CD8-positive, alpha-beta T cell (primary cell): ENCODE measurements at regions of chr16 and their contacts with region 1.

Region 1: GRCh38 chr16:81444448-81445121 is at the start of gene CMIP:
- DNase-seq: peak; percentile 66 to 92 (median 80)
- ATAC-seq: peak; percentile 64
- H3K4me3 ChIP-seq: peak within 1 kb of the TSS; percentile 67 to 75
- H3K4me3 Mint-ChIP-seq: peak within 1 kb of the TSS; percentile 91
- H3K27ac ChIP-seq: peak within 1 kb of the TSS; percentile 37 to 78
- H3K27ac Mint-ChIP-seq: peak within 1 kb of the TSS; percentile 93
- H3K4me1 ChIP-seq: peaks cover 50% of the 10 kb centered on the region
- H3K4me1 Mint-ChIP-seq: peaks cover 50% of the 10 kb centered on the region
- H3K27me3 ChIP-seq: no peaks in the 10 kb centered on the region
- H3K27me3 Mint-ChIP-seq: no peaks in the 10 kb centered on the region
- CTCF ChIP-seq: no peak
- total RNA-seq, gene CMIP: 40.9 to 42.1 TPM

Region 2: GRCh38 chr16:81077076-81077940 is 367.3 kb before region 1 on chr16 and contains the start of gene C16orf46:
- CTCF ChIA-PET with region 1: no interaction called
- POLR2A ChIA-PET with region 1: no interaction called
- intact Hi-C with region 1: loop called (anchors 5 kb)
- DNase-seq: peak; percentile 95 to 100 (median 96)
- ATAC-seq: peak; percentile 69
- H3K4me3 ChIP-seq: peak within 1 kb of the TSS; percentile 80 to 92
- H3K4me3 Mint-ChIP-seq: no peak within 1 kb of the TSS
- H3K27ac ChIP-seq: peak within 1 kb of the TSS; percentile 93 to 97
- H3K27ac Mint-ChIP-seq: no peak within 1 kb of the TSS
- H3K4me1 ChIP-seq: peaks cover 11% of the 10 kb centered on the region
- H3K4me1 Mint-ChIP-seq: peaks cover 4% of the 10 kb centered on the region
- H3K27me3 ChIP-seq: no peaks in the 10 kb centered on the region
- H3K27me3 Mint-ChIP-seq: no peaks in the 10 kb centered on the region
- CTCF ChIP-seq: no peak
- total RNA-seq, gene C16orf46: 0.47 to 0.76 TPM

Region 3: DNA sequence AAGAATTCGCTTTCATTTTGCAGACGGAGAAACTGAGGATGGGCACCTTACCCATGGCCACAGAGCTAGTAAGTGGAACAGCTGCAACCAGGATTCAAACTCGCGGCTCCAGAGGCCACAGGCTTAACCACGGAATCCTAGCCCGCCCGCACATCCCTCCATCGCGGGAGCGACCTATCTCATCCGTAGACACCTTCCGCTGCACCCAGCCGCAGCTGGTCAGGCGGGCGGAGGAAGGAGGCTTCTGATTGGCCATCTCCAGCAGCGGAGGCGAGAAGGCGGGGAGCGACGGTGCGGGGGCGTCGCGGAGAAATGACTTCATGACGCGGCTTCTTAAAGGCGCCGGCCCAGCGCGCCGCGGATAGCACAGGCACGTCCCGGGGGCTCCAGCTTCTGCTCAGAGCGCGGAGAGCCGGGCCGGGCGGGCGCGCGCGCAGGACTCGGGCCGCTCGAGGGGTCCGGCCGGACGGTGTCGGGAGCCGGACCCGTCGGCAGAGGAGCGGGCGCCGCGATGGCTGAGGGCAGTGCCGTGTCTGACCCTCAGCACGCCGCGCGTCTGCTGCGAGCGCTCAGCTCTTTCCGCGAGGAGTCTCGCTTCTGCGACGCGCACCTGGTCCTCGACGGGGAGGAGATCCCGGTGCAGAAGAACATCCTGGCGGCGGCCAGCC is 129.8 kb before region 1 on chr16 and contains the start of gene GAN:
- CTCF ChIA-PET with region 1: no interaction called
- POLR2A ChIA-PET with region 1: no interaction called
- intact Hi-C with region 1: loop called in 1 of 2 experiments (anchors 5 kb)
- DNase-seq: peak; percentile 86 to 97 (median 93)
- ATAC-seq: peak; percentile 96
- H3K4me3 ChIP-seq: peak within 1 kb of the TSS; percentile 77 to 87
- H3K4me3 Mint-ChIP-seq: peak within 1 kb of the TSS; percentile 95
- H3K27ac ChIP-seq: peak within 1 kb of the TSS; percentile 59 to 68
- H3K27ac Mint-ChIP-seq: peak within 1 kb of the TSS; percentile 93
- H3K4me1 ChIP-seq: peaks cover 18% of the 10 kb centered on the region
- H3K4me1 Mint-ChIP-seq: peaks cover 59% of the 10 kb centered on the region
- H3K27me3 ChIP-seq: no peaks in the 10 kb centered on the region
- H3K27me3 Mint-ChIP-seq: no peaks in the 10 kb centered on the region
- CTCF ChIP-seq: no peak
- total RNA-seq, gene GAN: 8.7 to 9.4 TPM

Region 4: GRCh38 chr16:81469710-81470535 is 25.3 kb after region 1 on chr16:
- CTCF ChIA-PET with region 1: interaction called, 3 read pairs
- POLR2A ChIA-PET with region 1: interaction called, 18 read pairs
- intact Hi-C with region 1: loop called (anchors 1 to 2 kb)
- DNase-seq: peak in 7 of 9 experiments; percentile 19 to 80 (median 47)
- ATAC-seq: peak; percentile 88
- H3K4me3 ChIP-seq: peak overlapping the region; percentile 28 to 36
- H3K4me3 Mint-ChIP-seq: peak overlapping the region; percentile 64
- H3K27ac ChIP-seq: peak overlapping the region; percentile 43 to 73
- H3K27ac Mint-ChIP-seq: peak overlapping the region; percentile 91
- H3K4me1 ChIP-seq: peaks cover 67% of the 10 kb centered on the region
- H3K4me1 Mint-ChIP-seq: peaks cover 77% of the 10 kb centered on the region
- H3K27me3 ChIP-seq: no peaks in the 10 kb centered on the region
- H3K27me3 Mint-ChIP-seq: no peaks in the 10 kb centered on the region
- CTCF ChIP-seq: no peak

Region 5: GRCh38 chr16:81531419-81531821 is 86.8 kb after region 1 on chr16:
- CTCF ChIA-PET with region 1: no interaction called
- POLR2A ChIA-PET with region 1: no interaction called
- intact Hi-C with region 1: no loop called
- DNase-seq: no peak
- ATAC-seq: no peak
- H3K4me3 ChIP-seq: no peak overlapping the region
- H3K4me3 Mint-ChIP-seq: no peak overlapping the region
- H3K27ac ChIP-seq: no peak overlapping the region
- H3K27ac Mint-ChIP-seq: no peak overlapping the region
- H3K4me1 ChIP-seq: peaks cover 20% of the 10 kb centered on the region
- H3K4me1 Mint-ChIP-seq: peaks cover 25% of the 10 kb centered on the region
- H3K27me3 ChIP-seq: no peaks in the 10 kb centered on the region
- H3K27me3 Mint-ChIP-seq: no peaks in the 10 kb centered on the region
- CTCF ChIP-seq: no peak

Region 6: GRCh38 chr16:81616321-81617055 is 171.9 kb after region 1 on chr16:
- CTCF ChIA-PET with region 1: interaction called, 4 read pairs
- POLR2A ChIA-PET with region 1: interaction called, 6 read pairs
- intact Hi-C with region 1: loop called in 1 of 2 experiments (anchors 1 kb)
- DNase-seq: peak; percentile 62 to 95 (median 80)
- ATAC-seq: peak; percentile 90
- H3K4me3 ChIP-seq: peak overlapping the region; percentile 13 to 35
- H3K4me3 Mint-ChIP-seq: peak overlapping the region; percentile 68
- H3K27ac ChIP-seq: peak overlapping the region; percentile 90 to 92
- H3K27ac Mint-ChIP-seq: peak overlapping the region; percentile 97
- H3K4me1 ChIP-seq: peaks cover 23% of the 10 kb centered on the region
- H3K4me1 Mint-ChIP-seq: peaks cover 16% of the 10 kb centered on the region
- H3K27me3 ChIP-seq: no peaks in the 10 kb centered on the region
- H3K27me3 Mint-ChIP-seq: no peaks in the 10 kb centered on the region
- CTCF ChIP-seq: no peak

Region 7: DNA sequence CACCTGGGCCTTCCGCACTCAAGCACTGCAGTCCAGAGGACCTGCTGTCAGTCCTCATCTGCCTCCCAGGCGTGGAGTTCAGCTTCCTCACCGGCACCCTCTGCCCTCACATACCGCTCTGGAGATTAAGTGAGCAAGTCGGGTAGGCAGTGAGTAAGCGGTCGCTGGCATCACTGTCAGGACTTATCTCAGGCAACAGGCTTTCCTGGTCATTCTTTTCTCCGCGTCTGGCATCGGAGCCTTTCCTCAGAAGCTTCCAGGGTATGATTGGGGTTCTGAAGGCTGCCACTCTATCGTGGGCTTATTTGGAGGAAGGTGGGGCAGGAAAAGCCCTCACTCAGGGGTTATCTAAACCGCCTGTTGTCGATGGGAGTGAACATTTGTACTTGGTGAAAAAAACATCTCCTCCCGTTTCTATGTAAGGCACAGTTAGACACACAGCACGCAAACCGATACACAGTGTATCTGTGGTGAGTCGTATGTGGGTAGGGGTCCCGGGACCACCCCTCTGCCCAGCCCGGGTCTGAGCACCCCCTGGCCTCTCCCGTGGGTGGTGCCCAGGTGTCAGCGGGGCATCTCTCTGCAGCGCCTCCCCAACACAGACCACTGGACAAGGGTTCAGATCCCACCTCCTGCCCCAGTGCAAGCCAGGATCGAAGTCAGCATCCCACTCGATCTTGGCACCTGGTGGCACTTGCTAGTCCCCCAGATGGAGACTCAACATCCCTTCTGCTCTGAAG is 242.0 kb after region 1 on chr16:
- CTCF ChIA-PET with region 1: no interaction called
- POLR2A ChIA-PET with region 1: no interaction called
- intact Hi-C with region 1: no loop called
- DNase-seq: no peak
- ATAC-seq: no peak
- H3K4me3 ChIP-seq: no peak overlapping the region
- H3K4me3 Mint-ChIP-seq: no peak overlapping the region
- H3K27ac ChIP-seq: no peak overlapping the region
- H3K27ac Mint-ChIP-seq: no peak overlapping the region
- H3K4me1 ChIP-seq: no peaks in the 10 kb centered on the region
- H3K4me1 Mint-ChIP-seq: peaks cover 17% of the 10 kb centered on the region
- H3K27me3 ChIP-seq: no peaks in the 10 kb centered on the region
- H3K27me3 Mint-ChIP-seq: no peaks in the 10 kb centered on the region
- CTCF ChIP-seq: no peak